ENCODE measurements at regions of chr1 and their contacts with region 1.

Region 1: DNA sequence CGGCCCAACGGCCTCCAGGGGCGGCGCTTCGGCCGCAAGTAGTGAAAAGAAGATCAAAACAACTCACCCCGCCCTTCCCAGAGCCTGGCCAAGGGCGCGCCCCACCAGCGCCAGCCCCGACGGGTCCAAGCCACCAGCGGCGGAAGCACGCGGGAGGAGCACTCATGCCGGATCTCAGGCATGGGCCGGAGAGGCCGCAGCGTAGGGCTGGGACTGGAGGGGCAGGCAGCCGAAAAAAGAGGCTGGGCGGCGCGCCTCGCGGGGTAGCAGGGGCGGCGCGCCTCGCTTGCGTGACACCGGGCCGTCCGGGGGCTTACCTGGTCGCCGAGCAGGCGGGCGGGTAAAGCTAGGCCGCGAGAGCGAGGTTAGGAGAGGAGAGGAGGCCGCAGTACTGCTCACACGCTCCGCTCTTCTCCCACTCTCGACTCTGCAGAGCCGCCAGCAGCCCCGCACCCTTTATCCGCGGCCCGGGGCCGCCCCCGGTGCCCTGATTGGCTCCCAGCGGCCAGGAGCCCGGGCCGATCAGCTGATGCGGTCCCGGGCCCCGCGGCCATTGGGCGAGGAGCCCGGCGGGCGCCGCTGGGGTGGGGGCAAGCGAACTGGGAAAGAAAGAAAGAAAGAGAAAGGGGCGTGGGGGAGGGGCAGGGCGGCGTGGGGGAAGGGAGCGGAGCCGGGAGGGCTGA is at the start of gene GLUL:
- DNase-seq: peak; percentile 81
- ATAC-seq: peak; percentile 80
- H3K4me3 ChIP-seq: peak within 1 kb of the TSS; percentile 64 to 76 (median 71)
- H3K4me3 Mint-ChIP-seq: peak within 1 kb of the TSS; percentile 97
- H3K27ac ChIP-seq: peak within 1 kb of the TSS; percentile 54 to 62
- H3K27ac Mint-ChIP-seq: peak within 1 kb of the TSS; percentile 96
- H3K4me1 ChIP-seq: peaks cover 20 to 34% of the 10 kb centered on the region in 2 donors
- H3K4me1 Mint-ChIP-seq: peaks cover 32% of the 10 kb centered on the region
- H3K27me3 ChIP-seq: peaks cover 0 to 15% (median 6%) of the 10 kb centered on the region in 4 experiments
- H3K27me3 Mint-ChIP-seq: peaks cover under 1% of the 10 kb centered on the region
- CTCF ChIP-seq: no peak
- total RNA-seq, gene GLUL: 44.2 and 53.7 TPM in 2 replicates

Region 2: DNA sequence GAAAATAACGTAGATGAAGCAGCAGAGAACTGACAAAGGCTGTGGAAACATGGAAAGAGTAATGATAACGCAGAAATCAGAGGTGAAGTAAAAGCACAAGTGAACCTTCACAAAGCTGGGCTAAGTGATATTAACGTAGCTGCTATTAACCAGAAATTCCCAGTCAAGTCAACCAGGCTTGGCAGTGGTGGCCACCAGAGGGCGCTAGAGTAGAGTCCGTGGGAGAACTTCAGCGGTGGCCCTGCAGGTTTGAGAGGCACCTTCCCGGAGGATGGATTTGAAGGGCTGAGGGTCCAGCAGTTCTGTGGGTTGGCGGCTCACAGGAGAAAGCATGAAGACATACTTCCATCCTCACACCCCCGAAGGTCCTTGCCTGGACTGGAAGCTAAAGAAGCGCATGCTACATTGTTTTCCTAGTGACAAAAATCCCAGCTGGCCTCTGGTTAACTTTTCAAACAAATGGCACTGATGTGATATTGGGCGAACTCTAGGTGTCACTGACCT is 248.3 kb before region 1 on chr1:
- CTCF ChIA-PET with region 1: interaction called, 378 read pairs
- POLR2A ChIA-PET with region 1: interaction called, 5 read pairs
- intact Hi-C with region 1: no loop called
- DNase-seq: peak; percentile 79
- ATAC-seq: peak; percentile 61
- H3K4me3 ChIP-seq: no peak overlapping the region
- H3K4me3 Mint-ChIP-seq: no peak overlapping the region
- H3K27ac ChIP-seq: no peak overlapping the region
- H3K27ac Mint-ChIP-seq: no peak overlapping the region
- H3K4me1 ChIP-seq: peaks cover 0 to 9% of the 10 kb centered on the region in 2 donors
- H3K4me1 Mint-ChIP-seq: peaks cover 8% of the 10 kb centered on the region
- H3K27me3 ChIP-seq: peaks cover 0 to 4% (median 0%) of the 10 kb centered on the region in 4 experiments
- H3K27me3 Mint-ChIP-seq: peaks cover 20% of the 10 kb centered on the region
- CTCF ChIP-seq: peak; percentile 90

Region 3: GRCh38 chr1:182330303-182330702 is 61.2 kb before region 1 on chr1:
- CTCF ChIA-PET with region 1: no interaction called
- POLR2A ChIA-PET with region 1: no interaction called
- intact Hi-C with region 1: loop called (anchors 5 kb)
- DNase-seq: no peak
- ATAC-seq: no peak
- H3K4me3 ChIP-seq: no peak overlapping the region
- H3K4me3 Mint-ChIP-seq: no peak overlapping the region
- H3K27ac ChIP-seq: no peak overlapping the region
- H3K27ac Mint-ChIP-seq: no peak overlapping the region
- H3K4me1 ChIP-seq: peaks cover 7 to 16% of the 10 kb centered on the region in 2 donors
- H3K4me1 Mint-ChIP-seq: peaks cover 16% of the 10 kb centered on the region
- H3K27me3 ChIP-seq: no peaks in the 10 kb centered on the region
- H3K27me3 Mint-ChIP-seq: no peaks in the 10 kb centered on the region
- CTCF ChIP-seq: no peak

Region 4: DNA sequence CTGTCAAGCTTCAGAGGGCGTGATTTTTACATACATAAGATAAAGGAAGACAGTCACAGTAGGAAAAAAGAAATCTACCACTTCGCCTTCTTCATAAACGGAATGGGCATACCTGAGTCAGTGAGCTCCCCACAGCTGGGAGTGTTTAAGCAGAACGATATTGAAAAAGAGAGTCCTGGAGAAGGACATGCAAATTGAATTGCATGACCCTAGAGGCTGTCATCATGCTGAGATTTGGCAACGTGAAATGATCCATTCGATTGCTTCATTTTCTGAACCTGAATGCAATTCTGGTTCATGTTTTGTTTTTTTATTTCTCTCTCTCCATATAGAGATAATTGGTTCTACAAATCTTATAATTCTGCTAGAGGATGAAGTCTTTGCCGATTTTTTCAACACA is 62.1 kb after region 1 on chr1:
- CTCF ChIA-PET with region 1: no interaction called
- POLR2A ChIA-PET with region 1: no interaction called
- intact Hi-C with region 1: no loop called
- DNase-seq: no peak
- ATAC-seq: no peak
- H3K4me3 ChIP-seq: no peak overlapping the region
- H3K4me3 Mint-ChIP-seq: no peak overlapping the region
- H3K27ac ChIP-seq: no peak overlapping the region
- H3K27ac Mint-ChIP-seq: no peak overlapping the region
- H3K4me1 ChIP-seq: no peaks in the 10 kb centered on the region
- H3K4me1 Mint-ChIP-seq: no peaks in the 10 kb centered on the region
- H3K27me3 ChIP-seq: no peaks in the 10 kb centered on the region
- H3K27me3 Mint-ChIP-seq: peaks cover 5% of the 10 kb centered on the region
- CTCF ChIP-seq: no peak

Region 5: DNA sequence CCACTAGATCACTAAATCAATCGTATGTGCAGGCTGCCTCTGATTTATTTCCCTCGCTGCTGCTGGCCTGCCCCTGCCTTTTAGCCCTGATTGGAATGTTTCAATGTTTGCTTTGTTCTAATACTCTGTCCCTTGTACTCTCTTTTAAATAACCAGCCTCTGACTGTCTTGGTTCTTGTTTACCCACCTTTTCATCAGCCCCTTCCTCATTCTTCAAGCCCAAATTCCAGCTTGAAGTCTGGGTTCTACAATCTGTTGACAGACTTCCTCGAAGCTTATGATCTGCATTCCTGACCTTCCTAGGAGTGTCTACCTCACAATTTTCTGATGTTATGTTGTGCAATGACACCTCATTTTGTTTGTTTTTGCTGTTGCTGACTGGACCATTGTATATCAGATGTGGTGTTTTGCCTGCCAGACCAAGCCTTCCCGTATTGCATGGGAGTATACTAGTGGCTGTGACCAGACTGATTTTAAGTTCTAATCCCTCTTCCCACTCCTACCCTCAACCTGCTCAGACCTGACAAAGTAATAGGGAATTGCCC is 1308.2 kb after region 1 on chr1:
- CTCF ChIA-PET with region 1: no interaction called
- POLR2A ChIA-PET with region 1: no interaction called
- intact Hi-C with region 1: no loop called
- DNase-seq: no peak
- ATAC-seq: no peak
- H3K4me3 ChIP-seq: no peak overlapping the region
- H3K4me3 Mint-ChIP-seq: no peak overlapping the region
- H3K27ac ChIP-seq: no peak overlapping the region
- H3K27ac Mint-ChIP-seq: no peak overlapping the region
- H3K4me1 ChIP-seq: no peaks in the 10 kb centered on the region
- H3K4me1 Mint-ChIP-seq: no peaks in the 10 kb centered on the region
- H3K27me3 ChIP-seq: no peaks in the 10 kb centered on the region
- H3K27me3 Mint-ChIP-seq: no peaks in the 10 kb centered on the region
- CTCF ChIP-seq: no peak